HepG2 (cell line): ENCODE measurements at regions of chr3 and their contacts with region 1.

Region 1: GRCh38 chr3:194058189-194058571 is 77.8 kb upstream of the HES1 start:
- DNase-seq: peak; percentile 65
- ATAC-seq: peak; percentile 93
- H3K4me3 ChIP-seq: peak overlapping the region; percentile 43 to 56 (median 47)
- H3K27ac ChIP-seq: peak overlapping the region; percentile 73
- H3K4me1 ChIP-seq: peaks cover 54% of the 10 kb centered on the region
- H3K27me3 ChIP-seq: no peaks in the 10 kb centered on the region
- CTCF ChIP-seq: 0 out of 2 replicates have a peak, but pooled peaks have one; percentile 13
- EP300 ChIP-seq: 0 out of 4 replicates have a peak, but pooled peaks of 1 of the 2 experiments have one; percentile 38
- POLR2A ChIP-seq: peak; percentile 51 to 62; a peak in 2 of 4 replicates
- RAD21 ChIP-seq: no peak; the same call in 1 of the 2 replicates

Region 2: DNA sequence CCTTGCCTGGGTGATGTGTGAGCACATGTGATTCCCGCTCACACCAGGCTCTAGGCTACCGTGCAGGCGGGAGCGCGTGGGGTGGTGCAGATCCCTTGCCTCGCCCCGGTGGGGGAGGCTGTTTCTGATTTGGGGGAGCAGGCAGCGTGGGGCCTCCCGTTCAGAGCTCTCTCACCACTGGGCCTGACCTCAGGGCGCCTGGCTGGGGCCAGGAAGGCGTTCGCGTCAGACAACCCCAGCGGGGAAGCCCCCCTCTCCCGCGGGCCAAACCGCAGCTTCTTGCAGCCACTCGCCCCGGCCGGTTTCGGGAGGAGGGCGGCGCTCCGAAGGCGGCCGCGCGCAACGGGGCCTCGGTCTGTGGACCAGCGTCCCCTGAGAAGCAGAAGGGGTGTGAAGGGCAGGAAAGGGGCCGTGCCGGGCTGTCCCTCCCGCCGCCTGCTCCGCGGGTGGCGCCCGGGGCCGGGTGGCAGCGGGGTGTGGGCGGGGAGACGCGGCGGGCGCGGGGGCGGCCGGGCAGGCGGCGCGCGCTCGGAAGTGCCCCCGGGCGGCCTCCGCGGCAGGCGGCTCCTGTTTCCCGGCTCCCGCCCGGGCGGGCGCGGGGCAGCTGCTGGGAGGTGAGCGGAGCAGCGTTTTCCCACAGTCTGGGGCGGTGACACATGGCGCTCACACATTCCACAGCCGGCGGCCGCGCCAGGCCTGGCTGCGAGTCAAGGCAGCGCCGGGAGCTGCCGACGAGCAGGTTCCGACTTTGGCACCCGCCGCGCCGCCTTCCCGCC is 12.6 kb after region 1 on chr3:
- CTCF ChIA-PET with region 1: no interaction called
- POLR2A ChIA-PET with region 1: interaction called, 30 read pairs
- in situ Hi-C with region 1: no loop called
- intact Hi-C with region 1: no loop called
- DNase-seq: peak; percentile 47
- ATAC-seq: peak; percentile 67
- H3K4me3 ChIP-seq: peak overlapping the region; percentile 41 to 68 (median 47); a peak in 5 of 6 replicates
- H3K27ac ChIP-seq: peak overlapping the region; percentile 68
- H3K4me1 ChIP-seq: peaks cover 53% of the 10 kb centered on the region
- H3K27me3 ChIP-seq: no peaks in the 10 kb centered on the region; a peak in 1 of 5 replicates
- CTCF ChIP-seq: no peak
- EP300 ChIP-seq: no peak; a peak in 2 of 4 replicates
- POLR2A ChIP-seq: peak in 1 of 2 experiments; percentile 33; a peak in 1 of 4 replicates
- RAD21 ChIP-seq: no peak; the same call in 1 of the 2 replicates

Region 3: GRCh38 chr3:194123726-194124125 is 65.5 kb after region 1 on chr3:
- CTCF ChIA-PET with region 1: no interaction called
- POLR2A ChIA-PET with region 1: interaction called, 10 read pairs
- in situ Hi-C with region 1: no loop called
- intact Hi-C with region 1: no loop called
- DNase-seq: no peak
- ATAC-seq: no peak
- H3K4me3 ChIP-seq: no peak overlapping the region
- H3K27ac ChIP-seq: no peak overlapping the region
- H3K4me1 ChIP-seq: peaks cover 35% of the 10 kb centered on the region
- H3K27me3 ChIP-seq: no peaks in the 10 kb centered on the region; a peak in 1 of 5 replicates
- CTCF ChIP-seq: no peak
- EP300 ChIP-seq: no peak
- POLR2A ChIP-seq: no peak
- RAD21 ChIP-seq: no peak

Region 4: DNA sequence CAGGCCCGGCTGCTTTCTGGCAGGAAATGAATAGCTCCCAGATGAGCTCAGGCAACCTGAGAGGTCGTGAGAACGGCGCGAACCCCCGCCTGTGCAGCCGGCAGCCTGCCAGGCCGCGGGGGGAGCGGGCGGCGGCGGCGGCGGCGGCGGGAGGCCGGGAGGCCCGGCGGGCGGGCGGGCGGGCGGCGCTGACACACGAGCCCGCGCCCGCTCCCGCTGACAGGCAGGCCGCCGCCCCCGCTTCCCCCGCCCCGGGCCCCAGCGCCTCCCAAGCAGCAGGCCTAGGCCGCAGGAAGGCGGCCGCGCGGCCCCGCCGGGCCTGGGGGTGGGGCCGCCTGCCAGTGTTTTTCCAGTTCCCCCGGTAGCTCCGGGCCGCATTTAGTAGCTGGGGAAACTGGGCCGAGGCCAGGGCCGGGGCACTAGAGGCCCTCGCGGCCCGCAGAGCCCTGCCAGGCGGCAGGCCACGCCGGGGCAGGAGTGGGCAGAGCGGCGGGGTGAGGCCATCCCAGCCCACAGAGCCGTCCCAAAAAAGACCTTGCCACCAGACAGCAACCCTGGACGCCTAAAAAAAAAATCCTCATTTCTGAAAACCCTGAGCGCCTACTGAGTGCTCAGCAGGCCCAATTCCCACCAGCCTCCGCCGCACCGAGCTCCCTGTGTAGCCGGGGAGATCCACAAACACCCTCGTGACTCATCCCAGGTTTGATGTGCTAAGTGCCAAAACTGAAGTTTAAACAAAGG is 83.4 kb after region 1 on chr3:
- CTCF ChIA-PET with region 1: no interaction called
- POLR2A ChIA-PET with region 1: interaction called, 24 read pairs
- in situ Hi-C with region 1: no loop called
- intact Hi-C with region 1: no loop called
- DNase-seq: peak; percentile 78
- ATAC-seq: peak; percentile 66
- H3K4me3 ChIP-seq: peak overlapping the region; percentile 51 to 74 (median 62); a peak in 5 of 6 replicates
- H3K27ac ChIP-seq: peak overlapping the region; percentile 92
- H3K4me1 ChIP-seq: peaks cover 45% of the 10 kb centered on the region
- H3K27me3 ChIP-seq: peaks cover 0 to 3% of the 10 kb centered on the region in 2 experiments; a peak in 2 of 5 replicates
- CTCF ChIP-seq: peak; percentile 30; the same call in 1 of the 2 replicates
- EP300 ChIP-seq: peak in 1 of 2 experiments; percentile 67; a peak in 2 of 4 replicates
- POLR2A ChIP-seq: peak in 1 of 2 experiments; percentile 66; a peak in 1 of 4 replicates
- RAD21 ChIP-seq: peak; percentile 65